ENCODE measurements at regions of chr15 and their contacts with region 1.

Region 1: DNA sequence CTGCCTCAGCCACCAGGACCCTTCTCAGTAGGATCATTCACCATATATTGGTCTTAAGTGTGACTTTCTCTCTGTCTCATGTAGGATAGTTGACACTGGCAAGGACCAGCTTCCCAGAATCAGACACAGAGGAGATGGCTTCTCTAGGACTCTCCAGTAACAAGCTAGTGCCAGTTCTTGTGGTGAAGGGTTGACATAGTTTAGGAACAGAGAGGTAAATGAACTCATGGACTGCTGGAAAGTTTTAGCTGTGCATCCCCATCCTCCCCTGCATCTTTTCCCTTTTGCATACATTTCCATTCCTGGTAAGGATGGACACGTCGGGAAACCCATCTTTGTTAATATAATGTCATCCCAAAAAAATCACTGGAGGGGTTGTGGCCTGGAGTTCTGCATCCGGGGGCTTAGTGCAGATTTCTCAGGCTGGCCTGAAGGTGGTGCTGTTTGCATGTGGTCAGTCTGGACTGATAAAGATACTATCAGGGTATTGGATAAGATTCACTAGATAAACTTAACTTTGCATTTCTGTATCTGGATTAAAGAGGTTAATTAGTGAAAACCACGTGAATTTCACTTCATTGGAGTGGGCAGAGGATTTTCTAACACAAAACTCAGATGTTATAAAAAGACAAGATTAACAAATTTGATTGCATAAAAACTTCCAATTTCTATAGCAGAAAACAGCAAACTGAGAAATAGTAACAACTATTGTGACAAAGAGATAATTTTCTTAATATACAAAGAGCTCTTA is 110.8 kb downstream of the TBC1D2B start:
- DNase-seq: no peak
- ATAC-seq: peak; percentile 96
- H3K4me3 ChIP-seq: no peak overlapping the region
- H3K27ac ChIP-seq: no peak overlapping the region
- H3K4me1 ChIP-seq: peaks cover 6% of the 10 kb centered on the region; the same call in 1 of the 2 replicates
- H3K27me3 ChIP-seq: no peaks in the 10 kb centered on the region
- CTCF ChIP-seq: peak; percentile 83 to 85 (median 84)
- EP300 ChIP-seq: no peak
- POLR2A ChIP-seq: no peak
- RAD21 ChIP-seq: peak; percentile 86

Region 2: DNA sequence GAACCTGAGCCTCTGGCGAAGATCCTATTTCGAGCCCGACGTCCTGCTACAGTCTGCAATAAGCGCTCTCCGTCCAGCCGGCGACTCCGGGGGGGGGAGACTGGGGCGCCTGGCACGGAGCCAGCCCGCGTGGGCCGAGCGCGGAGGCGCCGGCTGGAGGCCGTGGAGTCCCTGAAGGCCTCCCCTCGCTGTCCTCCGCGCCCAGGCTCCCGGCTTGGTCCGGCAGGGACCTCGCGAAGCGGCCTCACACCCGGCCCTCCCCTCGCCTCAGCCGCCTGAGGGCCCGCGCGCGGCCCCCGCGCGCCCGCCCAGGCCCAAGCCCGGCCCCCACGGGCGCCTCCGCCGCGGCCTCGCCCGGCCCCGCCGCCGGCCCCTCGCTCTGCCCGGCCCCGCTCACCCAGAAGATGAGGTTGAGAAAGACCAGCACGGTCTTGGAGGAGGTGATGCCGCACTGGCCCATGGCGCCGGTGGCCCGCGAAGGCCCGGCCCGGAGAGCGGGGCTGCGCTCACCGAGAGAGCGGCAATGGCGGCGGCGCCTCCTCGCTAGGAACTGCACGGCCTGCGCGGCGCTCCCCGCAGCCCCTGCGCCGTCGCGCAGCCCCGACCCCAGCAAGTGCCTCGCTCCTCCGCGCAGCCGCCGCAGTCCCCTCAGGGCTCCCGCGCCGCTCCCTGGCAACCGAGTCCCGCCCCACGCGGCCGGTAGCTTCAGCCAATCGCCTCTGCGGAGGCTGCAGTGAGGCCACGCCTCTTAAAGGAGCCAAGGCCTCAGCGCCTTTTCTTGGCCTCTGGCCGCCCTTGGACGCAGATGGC is 896.0 kb before region 1 on chr15 and contains the start of gene TSPAN3:
- CTCF ChIA-PET with region 1: no interaction called
- POLR2A ChIA-PET with region 1: no interaction called
- RAD21 ChIA-PET with region 1: no interaction called
- SMC1A ChIA-PET with region 1: no interaction called
- in situ Hi-C with region 1: no loop called
- intact Hi-C with region 1: no loop called
- DNase-seq: peak; percentile 54
- ATAC-seq: peak; percentile 99
- H3K4me3 ChIP-seq: peak within 1 kb of the TSS; percentile 83
- H3K27ac ChIP-seq: peak within 1 kb of the TSS; percentile 72
- H3K4me1 ChIP-seq: peaks cover 25% of the 10 kb centered on the region
- H3K27me3 ChIP-seq: no peaks in the 10 kb centered on the region; a peak in 1 of 4 replicates
- CTCF ChIP-seq: no peak
- EP300 ChIP-seq: no peak
- POLR2A ChIP-seq: peak; percentile 89
- RAD21 ChIP-seq: no peak
- polyA plus RNA-seq, gene TSPAN3: 18.9 to 31.7 TPM

Region 3: DNA sequence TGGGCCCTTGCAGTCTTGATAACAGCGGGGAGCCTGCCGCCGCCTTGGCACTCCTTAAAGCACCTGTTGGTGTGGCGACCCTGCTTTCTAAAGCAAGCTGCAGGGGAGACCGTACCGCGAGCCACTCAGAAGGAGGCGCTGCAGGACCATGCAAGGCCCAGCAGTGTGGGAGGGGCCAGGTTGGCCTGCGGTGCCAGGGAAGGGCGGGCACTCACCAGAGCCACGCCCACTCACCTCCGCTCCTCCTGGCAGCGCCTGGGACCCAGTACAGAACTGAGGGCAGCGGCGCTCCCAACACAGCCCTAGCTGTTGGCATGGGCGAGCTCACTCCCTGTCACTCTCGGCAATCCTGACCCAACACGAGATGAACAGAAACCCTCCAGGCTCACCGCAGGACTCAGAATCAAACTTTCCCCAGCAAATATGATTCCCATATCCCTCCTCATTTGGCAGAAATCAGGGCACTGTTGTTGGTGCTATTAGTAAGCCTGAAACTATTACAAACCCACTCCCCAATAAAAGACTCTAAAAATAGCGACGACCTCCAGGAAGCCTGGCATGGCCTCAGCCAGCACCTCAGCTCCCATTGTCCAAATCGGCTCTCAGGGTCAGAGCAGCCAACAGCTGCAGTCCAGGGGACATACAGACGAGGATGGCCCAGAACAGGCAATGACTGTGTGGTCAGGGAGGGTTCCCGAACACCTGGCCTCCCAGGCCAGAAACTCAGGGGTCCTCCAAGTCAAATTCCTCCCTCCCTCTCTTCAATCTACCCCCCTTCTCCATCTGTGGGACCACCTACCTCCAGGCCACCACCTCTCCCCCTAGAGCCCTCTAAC is 33.6 kb after region 1 on chr15:
- CTCF ChIA-PET with region 1: interaction called, 26 read pairs
- POLR2A ChIA-PET with region 1: no interaction called
- RAD21 ChIA-PET with region 1: interaction called, 3 read pairs
- SMC1A ChIA-PET with region 1: no interaction called
- in situ Hi-C with region 1: no loop called
- intact Hi-C with region 1: loop called (anchors 5 kb)
- DNase-seq: no peak
- ATAC-seq: peak; percentile 87
- H3K4me3 ChIP-seq: no peak overlapping the region
- H3K27ac ChIP-seq: no peak overlapping the region
- H3K4me1 ChIP-seq: peaks cover 16% of the 10 kb centered on the region
- H3K27me3 ChIP-seq: no peaks in the 10 kb centered on the region
- CTCF ChIP-seq: peak; percentile 62 to 82 (median 72)
- EP300 ChIP-seq: no peak
- POLR2A ChIP-seq: no peak
- RAD21 ChIP-seq: peak; percentile 82

Region 4: DNA sequence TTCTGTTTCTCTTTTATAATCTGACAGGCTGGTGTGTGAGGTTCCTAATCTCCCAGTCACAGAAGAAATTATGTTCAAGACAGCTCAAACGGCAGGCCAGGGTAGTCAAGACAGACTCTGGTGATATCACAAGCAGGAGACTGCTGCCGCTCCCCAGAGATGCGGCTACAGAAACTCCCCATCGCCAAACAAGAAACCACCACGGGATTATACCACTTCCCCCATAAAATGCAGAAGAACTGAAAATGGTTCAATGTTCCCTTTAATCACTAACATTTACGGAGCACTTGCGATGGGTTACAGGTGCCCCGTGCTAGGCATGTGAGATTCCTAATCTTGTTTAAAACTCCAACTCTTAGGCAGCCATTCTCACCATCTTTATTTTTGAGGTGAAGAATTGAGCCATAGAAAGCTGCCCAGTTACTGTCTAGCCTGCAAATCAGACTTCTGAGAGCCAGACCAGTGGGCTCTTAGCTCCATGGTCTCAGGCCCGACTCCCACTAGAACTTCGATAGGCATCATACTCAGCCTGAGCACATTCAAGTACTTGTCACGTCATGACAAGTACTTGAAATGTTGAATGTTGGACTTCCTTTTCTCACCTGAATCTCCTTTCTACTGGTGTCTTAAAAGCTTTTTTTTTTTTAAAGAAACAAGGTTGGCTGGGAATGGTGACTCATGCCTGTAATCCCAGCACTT is 52.4 kb after region 1 on chr15:
- CTCF ChIA-PET with region 1: interaction called, 12 read pairs
- POLR2A ChIA-PET with region 1: no interaction called
- RAD21 ChIA-PET with region 1: interaction called, 6 read pairs
- SMC1A ChIA-PET with region 1: interaction called, 7 read pairs
- in situ Hi-C with region 1: no loop called
- intact Hi-C with region 1: no loop called
- DNase-seq: no peak
- ATAC-seq: peak; percentile 97
- H3K4me3 ChIP-seq: no peak overlapping the region
- H3K27ac ChIP-seq: peak overlapping the region; percentile 60
- H3K4me1 ChIP-seq: peaks cover 7% of the 10 kb centered on the region
- H3K27me3 ChIP-seq: no peaks in the 10 kb centered on the region
- CTCF ChIP-seq: no peak
- EP300 ChIP-seq: no peak
- POLR2A ChIP-seq: no peak
- RAD21 ChIP-seq: no peak

Region 5: DNA sequence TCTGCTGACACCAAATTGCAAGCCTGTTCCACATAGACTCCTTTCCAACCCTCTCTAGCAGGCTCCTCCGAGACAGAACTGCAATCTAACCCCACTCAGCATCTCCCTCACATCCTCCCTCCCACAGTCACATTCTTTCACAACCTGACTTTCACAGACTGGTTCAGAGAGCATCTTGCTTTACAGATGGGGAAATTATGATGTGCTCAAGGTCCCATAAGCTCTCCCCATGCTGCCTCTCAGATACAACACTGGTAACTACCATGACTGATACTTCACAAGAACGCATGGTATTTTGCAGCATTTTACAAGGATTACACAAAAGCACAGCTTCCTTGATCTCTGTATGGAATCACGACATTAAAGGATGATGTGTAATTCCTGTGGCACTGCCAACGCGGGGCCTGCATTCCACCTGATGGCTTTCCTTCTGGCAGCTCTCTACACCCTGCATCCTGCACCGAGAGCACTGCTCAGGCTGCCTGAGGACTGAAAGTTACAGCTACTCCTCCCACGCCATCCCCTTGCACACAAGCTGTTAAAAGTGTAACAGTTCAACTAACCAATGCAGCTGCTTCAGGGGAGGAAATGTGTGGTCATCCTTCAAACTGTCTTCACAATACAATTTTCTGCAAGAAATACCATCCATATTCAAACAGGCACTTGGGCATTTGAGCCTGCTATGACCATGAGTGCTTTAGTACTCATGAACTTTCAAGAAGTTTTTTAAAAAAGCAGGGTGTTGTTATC is 83.2 kb after region 1 on chr15:
- CTCF ChIA-PET with region 1: interaction called, 24 read pairs
- POLR2A ChIA-PET with region 1: no interaction called
- RAD21 ChIA-PET with region 1: interaction called, 3 read pairs
- SMC1A ChIA-PET with region 1: interaction called, 7 read pairs
- in situ Hi-C with region 1: no loop called
- intact Hi-C with region 1: no loop called
- DNase-seq: peak; percentile 68
- ATAC-seq: peak; percentile 92
- H3K4me3 ChIP-seq: peak overlapping the region; percentile 45; the same call in 1 of the 2 replicates
- H3K27ac ChIP-seq: peak overlapping the region; percentile 53
- H3K4me1 ChIP-seq: peaks cover 71% of the 10 kb centered on the region
- H3K27me3 ChIP-seq: no peaks in the 10 kb centered on the region
- CTCF ChIP-seq: no peak
- EP300 ChIP-seq: peak; percentile 52 to 84
- POLR2A ChIP-seq: peak; percentile 63
- RAD21 ChIP-seq: no peak

Region 6: DNA sequence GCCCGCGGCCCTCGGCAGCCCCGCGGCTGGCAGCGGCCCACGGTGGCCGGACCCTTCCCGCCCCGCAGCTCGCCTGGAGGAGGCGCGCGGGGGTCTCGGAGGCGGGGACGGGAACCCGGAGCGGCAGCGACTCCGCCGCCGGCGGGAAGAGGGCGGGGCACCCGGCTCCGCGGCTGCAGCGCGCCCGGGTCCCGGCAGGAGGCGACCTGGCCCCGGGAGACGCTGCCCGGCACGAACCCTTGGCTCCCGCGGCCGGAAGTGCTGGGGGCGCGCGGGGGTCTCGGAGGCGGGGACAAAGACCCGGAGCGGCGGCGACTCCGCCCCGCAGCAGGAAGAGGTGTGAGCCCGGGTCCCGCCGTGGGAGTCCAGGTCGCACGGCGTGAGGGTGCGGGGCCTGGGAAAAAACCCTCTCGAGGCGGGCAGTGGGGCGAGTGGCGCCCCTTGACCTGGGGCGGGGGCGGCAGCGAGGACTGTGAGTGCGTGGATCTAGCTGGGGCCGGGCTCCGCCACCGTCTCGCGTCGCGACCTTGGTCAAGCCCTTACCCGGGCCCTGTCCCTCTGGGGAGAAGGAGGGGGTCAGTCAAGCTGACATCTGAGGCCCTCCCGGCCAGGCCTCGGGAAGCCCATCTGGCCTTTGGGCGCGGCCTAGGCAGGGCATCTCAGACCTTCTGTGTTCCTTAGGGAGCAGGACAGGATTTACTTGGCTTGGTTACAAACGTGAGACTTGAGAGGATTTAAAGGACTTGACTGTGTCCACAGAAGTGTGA is 164.8 kb after region 1 on chr15 and contains the start of gene CIB2:
- CTCF ChIA-PET with region 1: interaction called, 10 read pairs
- POLR2A ChIA-PET with region 1: no interaction called
- RAD21 ChIA-PET with region 1: interaction called, 6 read pairs
- SMC1A ChIA-PET with region 1: no interaction called
- in situ Hi-C with region 1: no loop called
- intact Hi-C with region 1: no loop called
- DNase-seq: no peak
- ATAC-seq: peak; percentile 93
- H3K4me3 ChIP-seq: peak within 1 kb of the TSS; percentile 88
- H3K27ac ChIP-seq: peak within 1 kb of the TSS; percentile 72
- H3K4me1 ChIP-seq: peaks cover 5% of the 10 kb centered on the region
- H3K27me3 ChIP-seq: no peaks in the 10 kb centered on the region
- CTCF ChIP-seq: peak; percentile 65 to 92 (median 73); a peak in 5 of 6 replicates
- EP300 ChIP-seq: no peak
- POLR2A ChIP-seq: peak; percentile 80
- RAD21 ChIP-seq: peak; percentile 73
- polyA plus RNA-seq, gene CIB2: 0.56 to 1.6 TPM